ENCODE measurements at regions of chr18 and their contacts with region 1.

Region 1: GRCh38 chr18:48842259-48843061 is 108.3 kb downstream of the SMAD7 start:
- DNase-seq: no peak
- H3K4me3 ChIP-seq: no peak overlapping the region
- CTCF ChIP-seq: no peak

Region 2: GRCh38 chr18:48771641-48772375 is 70.7 kb before region 1 on chr18:
- in situ Hi-C with region 1: loop called (anchors 5 kb)
- DNase-seq: no peak
- H3K4me3 ChIP-seq: no peak overlapping the region
- CTCF ChIP-seq: no peak

Region 3: DNA sequence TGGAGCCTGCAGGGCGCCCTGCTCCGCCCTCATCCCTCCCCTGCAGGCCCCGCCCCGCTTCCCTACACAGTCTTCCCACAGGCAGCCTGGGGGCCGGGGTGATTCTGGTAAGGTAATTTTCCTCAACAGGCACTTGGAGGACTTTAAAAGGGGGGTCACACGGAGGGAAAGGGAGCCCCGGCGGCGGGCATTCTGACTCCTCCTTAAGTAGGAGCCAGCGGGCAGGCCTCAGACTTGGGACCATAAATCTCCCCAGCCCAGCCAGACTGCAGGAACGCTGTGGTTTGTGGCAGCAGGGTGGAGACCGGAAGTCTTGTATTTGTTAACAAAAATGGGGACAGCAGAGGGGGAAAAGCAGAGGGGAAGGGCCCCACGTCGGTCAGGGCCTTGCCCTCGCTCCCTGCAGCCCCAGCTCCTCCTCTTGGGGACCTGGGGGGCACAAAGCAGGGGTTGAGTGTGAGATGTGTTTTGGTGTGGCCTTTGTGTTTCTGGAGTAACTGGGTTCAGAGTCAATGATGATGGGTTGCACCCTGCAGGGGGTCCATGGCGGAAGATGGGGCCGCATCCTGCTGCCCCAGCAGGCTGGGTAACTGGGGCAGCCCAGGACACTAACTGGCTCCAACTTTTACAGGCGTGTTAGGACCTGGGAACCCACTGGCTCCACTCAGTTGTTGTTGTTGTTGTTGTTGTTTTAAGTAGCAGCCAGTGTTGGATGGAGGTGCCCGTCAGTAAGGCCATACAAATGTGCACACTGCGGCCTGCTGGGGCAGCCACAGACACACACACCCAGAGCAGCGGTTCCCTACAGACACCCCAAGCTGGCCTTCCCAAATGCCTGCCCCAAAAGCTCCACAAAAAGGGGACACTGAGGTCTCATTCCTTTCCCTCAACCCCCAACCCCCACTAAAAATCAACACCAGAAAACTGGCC is 80.6 kb after region 1 on chr18:
- in situ Hi-C with region 1: loop called (anchors 5 kb)
- DNase-seq: peak; percentile 68
- H3K4me3 ChIP-seq: peak overlapping the region; percentile 11
- CTCF ChIP-seq: no peak

Region 4: DNA sequence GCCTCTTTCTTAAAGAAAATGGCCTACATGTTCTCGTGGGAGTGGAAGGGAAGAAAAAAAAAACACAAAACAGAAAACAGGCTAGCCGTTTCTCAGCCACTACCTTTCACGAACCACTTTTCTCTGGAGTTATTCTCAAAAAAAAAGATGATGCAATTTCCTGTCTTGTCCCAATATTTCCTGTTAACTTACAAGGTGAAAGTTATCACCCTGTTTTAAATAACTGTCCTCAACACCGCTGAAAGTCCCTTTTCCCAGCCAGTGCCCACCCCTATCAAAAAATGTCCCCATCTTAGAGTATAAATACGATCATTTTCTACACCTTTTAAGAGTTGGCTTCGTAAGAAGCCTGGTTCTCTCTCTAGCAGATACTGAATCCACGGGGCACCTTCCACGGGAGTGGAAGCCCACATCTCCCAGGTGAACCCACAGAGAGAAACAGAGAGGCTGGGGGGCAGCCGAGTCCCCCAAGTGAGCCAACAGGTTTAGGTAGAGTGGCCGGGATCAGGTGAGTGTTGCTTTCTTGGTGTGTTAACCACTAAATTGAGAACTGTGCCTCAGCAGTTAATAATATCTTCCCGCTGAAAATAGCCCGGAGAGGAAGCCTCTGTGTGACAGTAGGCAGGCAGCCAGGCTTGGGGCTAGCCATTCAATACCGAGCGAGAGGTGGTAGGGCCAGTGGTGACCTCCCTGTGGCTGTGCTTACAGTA is 92.4 kb after region 1 on chr18:
- in situ Hi-C with region 1: no loop called
- DNase-seq: no peak
- H3K4me3 ChIP-seq: no peak overlapping the region
- CTCF ChIP-seq: no peak